Sigmoid colon (tissue), 7 donors: ENCODE measurements at regions of chr12 and their contacts with region 1.

Region 1: GRCh38 chr12:54324617-54325441 is at the start of gene COPZ1:
- DNase-seq: peak; percentile 98
- H3K4me3 ChIP-seq: peak within 1 kb of the TSS; percentile 63 to 83 (median 77)
- H3K27ac ChIP-seq: peak within 1 kb of the TSS; percentile 86 to 89 (median 88)
- H3K4me1 ChIP-seq: peaks cover 0 to 43% (median 34%) of the 10 kb centered on the region in 4 donors
- H3K27me3 ChIP-seq: no peaks in the 10 kb centered on the region
- CTCF ChIP-seq: peak; percentile 40 to 68 (median 56)
- EP300 ChIP-seq: no peak
- POLR2A ChIP-seq: peak; percentile 60 to 76
- total RNA-seq, gene COPZ1: 39.6 to 74.2 (median 61.2) TPM

Region 2: GRCh38 chr12:54259194-54260011 is 65.4 kb before region 1 on chr12:
- intact Hi-C with region 1: no loop called
- DNase-seq: peak; percentile 92
- H3K4me3 ChIP-seq: peak overlapping the region; percentile 26 to 50 (median 46)
- H3K27ac ChIP-seq: peak overlapping the region; percentile 60 to 86 (median 68)
- H3K4me1 ChIP-seq: peaks cover 0 to 48% (median 34%) of the 10 kb centered on the region in 4 donors
- H3K27me3 ChIP-seq: no peaks in the 10 kb centered on the region
- CTCF ChIP-seq: no peak
- EP300 ChIP-seq: no peak
- POLR2A ChIP-seq: no peak

Region 3: DNA sequence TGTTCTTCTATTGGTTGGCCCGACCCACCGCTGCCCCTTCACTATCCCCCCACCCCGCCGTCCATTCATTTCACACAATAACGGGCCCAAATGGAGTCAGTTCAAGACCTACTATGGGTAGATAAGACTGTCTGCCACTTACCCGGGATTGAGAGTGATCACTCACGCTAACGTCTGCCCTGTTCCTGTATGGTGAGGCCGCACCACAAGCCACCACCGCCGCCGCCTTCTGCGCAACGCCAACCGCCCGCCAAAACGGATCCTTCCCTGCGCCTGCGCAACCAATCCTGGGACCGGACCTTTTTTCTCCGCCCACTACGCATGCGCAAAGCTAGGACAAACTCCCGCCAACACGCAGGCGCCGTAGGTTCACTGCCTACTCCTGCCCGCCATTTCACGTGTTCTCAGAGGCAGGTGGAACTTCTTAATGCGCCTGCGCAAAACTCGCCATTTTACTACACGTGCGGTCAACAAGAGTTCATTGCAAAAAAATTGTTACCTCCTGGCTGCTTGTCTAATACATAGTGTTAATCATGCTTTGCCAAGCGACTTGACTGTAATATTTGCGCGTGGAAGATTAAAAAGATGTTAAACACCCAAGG is 44.9 kb before region 1 on chr12 and contains the start of gene CBX5:
- intact Hi-C with region 1: loop called (anchors 2 kb)
- DNase-seq: peak; percentile 100
- H3K4me3 ChIP-seq: peak within 1 kb of the TSS; percentile 68 to 81 (median 78)
- H3K27ac ChIP-seq: peak within 1 kb of the TSS; percentile 84 to 96 (median 94)
- H3K4me1 ChIP-seq: peaks cover 0 to 58% (median 55%) of the 10 kb centered on the region in 4 donors
- H3K27me3 ChIP-seq: no peaks in the 10 kb centered on the region
- CTCF ChIP-seq: no peak
- EP300 ChIP-seq: peak in 1 of 4 donors; percentile 42
- POLR2A ChIP-seq: peak in 1 of 2 donors; percentile 45
- total RNA-seq, gene CBX5: 18.6 to 30.7 (median 24.8) TPM

Region 4: DNA sequence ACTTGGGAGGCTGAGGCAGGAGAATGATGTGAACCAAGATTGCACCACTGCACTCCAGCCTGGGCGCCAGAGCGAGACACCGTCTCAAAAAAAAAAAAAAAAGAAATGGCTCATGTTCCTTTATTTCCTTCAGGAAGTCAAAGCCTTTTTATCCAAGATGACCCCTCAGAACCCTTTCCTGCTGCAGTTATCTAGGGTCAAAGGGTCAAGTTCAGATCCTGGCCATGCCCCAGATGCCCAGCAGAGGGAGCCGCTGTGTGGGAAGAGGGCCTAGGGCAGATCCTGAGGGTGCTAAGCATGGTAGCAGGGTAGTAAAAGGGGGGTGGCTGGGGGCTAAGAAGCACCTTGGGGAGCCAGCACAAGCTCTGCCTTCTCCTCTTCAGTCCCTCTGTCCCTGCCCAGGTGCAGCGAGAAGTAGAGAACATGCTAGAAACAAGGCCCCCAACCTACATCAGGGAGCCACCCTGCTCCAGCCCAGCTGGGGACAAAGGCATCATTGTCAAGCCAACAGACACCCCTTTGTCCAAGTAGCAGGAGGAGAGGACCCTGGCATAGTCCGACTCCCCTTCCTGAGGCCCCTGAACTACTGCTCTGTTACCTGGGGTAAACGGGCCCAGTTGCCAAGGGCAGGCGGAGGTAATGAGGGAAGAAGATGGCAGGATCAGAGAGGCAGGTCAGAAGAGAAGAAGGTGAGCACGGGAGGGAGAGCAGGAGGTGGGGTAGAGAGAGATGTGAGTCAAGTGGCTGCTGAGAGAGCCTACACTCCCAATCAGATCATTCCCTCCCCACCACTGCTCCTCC is 30.5 kb before region 1 on chr12:
- intact Hi-C with region 1: no loop called
- DNase-seq: no peak
- H3K4me3 ChIP-seq: no peak overlapping the region
- H3K27ac ChIP-seq: no peak overlapping the region
- H3K4me1 ChIP-seq: no peaks in the 10 kb centered on the region
- H3K27me3 ChIP-seq: peaks cover 0 to 9% (median 9%) of the 10 kb centered on the region in 3 donors
- CTCF ChIP-seq: peak; percentile 56 to 84 (median 62)
- EP300 ChIP-seq: no peak
- POLR2A ChIP-seq: no peak